HCT116 (cell line): ENCODE measurements at regions of chr4 and their contacts with region 1.

Region 1: GRCh38 chr4:102620697-102621497 is 119.7 kb downstream of the NFKB1 start:
- DNase-seq: peak; percentile 76
- ATAC-seq: peak; percentile 91
- H3K4me3 ChIP-seq: peak overlapping the region; percentile 28 to 42
- H3K27ac ChIP-seq: peak overlapping the region; percentile 36
- H3K4me1 ChIP-seq: peaks cover 17 to 30% of the 10 kb centered on the region in 2 experiments
- H3K27me3 ChIP-seq: no peaks in the 10 kb centered on the region
- CTCF ChIP-seq: peak; percentile 61 to 97 (median 81)
- POLR2A ChIP-seq: no peak
- RAD21 ChIP-seq: peak; percentile 97

Region 2: DNA sequence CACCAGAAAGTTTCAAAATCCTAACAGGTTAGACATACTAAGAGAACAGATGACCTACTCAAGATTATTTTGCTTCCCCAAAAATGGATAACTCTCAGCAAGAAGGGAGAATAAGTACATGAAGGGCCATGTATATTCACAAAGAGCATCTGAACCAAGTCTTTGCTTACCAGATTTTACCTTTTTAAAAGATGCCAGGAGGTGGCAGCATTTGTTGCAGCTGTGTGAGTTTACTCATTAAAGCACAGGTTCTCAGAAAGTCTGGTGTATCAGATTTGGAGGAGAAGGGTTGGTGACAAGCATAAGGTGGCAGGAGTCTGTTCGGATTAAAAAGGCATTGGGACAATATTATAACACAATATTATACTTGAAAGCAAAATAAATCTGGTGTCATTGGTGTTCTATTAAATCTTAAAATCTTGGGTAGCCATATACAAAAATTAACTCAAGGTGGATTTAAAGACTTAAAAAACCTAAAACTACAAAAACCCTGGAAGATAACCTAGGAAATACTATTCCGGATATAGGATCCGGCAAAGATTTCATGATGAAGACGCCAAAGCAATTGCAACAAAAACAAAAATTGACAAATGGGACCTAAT is 171.0 kb before region 1 on chr4:
- CTCF ChIA-PET with region 1: interaction called, 3 read pairs
- POLR2A ChIA-PET with region 1: no interaction called
- RAD21 ChIA-PET with region 1: interaction called in 1 of 2 experiments, 5 read pairs
- intact Hi-C with region 1: loop called (anchors 5 kb)
- DNase-seq: peak; percentile 42
- ATAC-seq: peak; percentile 82
- H3K4me3 ChIP-seq: no peak overlapping the region
- H3K27ac ChIP-seq: no peak overlapping the region
- H3K4me1 ChIP-seq: no peaks in the 10 kb centered on the region
- H3K27me3 ChIP-seq: no peaks in the 10 kb centered on the region
- CTCF ChIP-seq: peak; percentile 54 to 82 (median 80)
- POLR2A ChIP-seq: no peak
- RAD21 ChIP-seq: peak; percentile 88

Region 3: DNA sequence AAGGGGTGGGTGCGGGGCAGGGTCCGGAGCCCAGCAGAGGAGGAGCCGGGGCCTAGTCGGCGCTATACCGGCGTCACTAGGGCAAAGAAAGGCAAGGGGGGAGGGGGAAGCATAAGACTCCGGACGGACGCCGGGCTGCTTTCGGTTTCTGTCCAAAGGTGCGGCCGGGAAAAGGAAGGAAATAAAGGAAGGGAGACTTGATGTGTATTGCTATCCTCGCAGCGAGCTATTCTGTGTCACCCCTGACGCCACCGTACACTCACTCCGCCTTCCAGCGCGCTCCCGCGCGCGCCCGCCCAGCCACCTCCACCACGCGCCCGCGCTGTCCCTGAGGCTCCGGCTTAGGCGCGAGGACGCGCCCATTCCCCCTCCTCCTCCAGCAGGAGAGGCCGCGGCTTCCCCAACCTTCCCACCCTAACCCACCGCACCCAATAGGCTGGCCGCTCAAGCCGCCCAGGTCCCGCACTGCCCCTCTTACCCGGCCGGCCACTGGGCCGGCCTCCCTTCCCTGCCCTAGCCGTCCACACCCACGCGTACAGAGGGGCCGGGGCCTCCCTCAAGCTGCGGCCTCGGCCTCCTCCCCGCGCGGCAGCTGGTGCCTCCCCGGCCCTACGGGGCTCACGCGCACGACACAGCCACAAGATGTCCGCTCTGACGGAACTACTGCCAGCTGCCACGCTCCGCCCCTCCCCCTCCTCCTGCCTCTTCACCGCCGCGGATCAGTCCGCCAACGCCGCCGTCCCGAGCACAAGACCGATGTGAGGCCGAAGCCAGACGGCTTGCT is 206.2 kb after region 1 on chr4 and contains the start of gene UBE2D3:
- CTCF ChIA-PET with region 1: interaction called, 7 read pairs
- POLR2A ChIA-PET with region 1: interaction called, 6 read pairs
- RAD21 ChIA-PET with region 1: interaction called, 3 read pairs
- intact Hi-C with region 1: loop called (anchors 1 kb)
- DNase-seq: peak; percentile 92
- ATAC-seq: peak; percentile 58
- H3K4me3 ChIP-seq: peak within 1 kb of the TSS; percentile 76 to 83
- H3K27ac ChIP-seq: peak within 1 kb of the TSS; percentile 90
- H3K4me1 ChIP-seq: peaks cover 9 to 27% of the 10 kb centered on the region in 2 experiments
- H3K27me3 ChIP-seq: no peaks in the 10 kb centered on the region
- CTCF ChIP-seq: no peak; a peak in 1 of 6 replicates
- POLR2A ChIP-seq: peak; percentile 67
- RAD21 ChIP-seq: no peak
- total RNA-seq, gene UBE2D3: 302 TPM

Region 4: DNA sequence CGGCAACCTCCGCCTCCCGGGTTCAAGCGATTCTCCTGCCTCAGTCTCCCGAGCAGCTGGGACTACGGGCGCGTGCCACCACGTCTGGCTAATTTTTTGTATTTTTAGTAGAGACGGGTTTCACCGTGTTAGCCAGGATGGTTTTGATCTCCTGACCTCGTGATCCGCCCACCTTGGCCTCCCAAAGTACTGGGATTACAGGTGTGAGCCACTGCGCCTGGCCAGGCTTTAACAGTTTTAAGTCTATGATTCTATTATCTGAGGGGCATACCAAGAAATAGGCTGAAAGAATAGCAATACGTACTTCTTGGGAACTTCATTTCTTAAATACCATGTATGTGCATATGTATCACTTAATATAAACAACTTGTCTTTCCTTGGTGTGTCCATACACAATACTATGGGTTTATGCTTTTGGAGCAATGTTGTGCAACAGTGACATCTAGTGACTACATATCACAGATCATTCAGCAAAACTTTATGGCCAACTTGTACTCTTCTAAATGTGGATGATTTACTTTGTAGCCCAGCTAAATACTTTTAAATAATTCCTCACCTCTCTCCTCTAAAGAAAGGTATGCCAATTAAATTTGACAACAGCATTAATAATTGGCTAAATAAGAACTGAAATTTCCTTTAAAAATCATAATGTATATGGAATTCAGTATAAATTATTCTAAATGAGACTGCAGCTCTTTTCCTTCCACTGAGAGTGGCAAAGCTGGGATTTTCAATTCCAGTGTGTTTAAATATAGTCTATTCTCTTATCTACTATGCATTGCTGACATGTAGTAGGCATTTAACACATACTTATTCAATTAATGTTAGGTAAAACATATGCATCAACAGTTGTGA is 388.2 kb after region 1 on chr4:
- CTCF ChIA-PET with region 1: interaction called, 65 read pairs
- POLR2A ChIA-PET with region 1: no interaction called
- RAD21 ChIA-PET with region 1: interaction called, 4 to 9 read pairs
- intact Hi-C with region 1: loop called (anchors 1 kb)
- DNase-seq: peak; percentile 68
- ATAC-seq: peak; percentile 94
- H3K4me3 ChIP-seq: no peak overlapping the region
- H3K27ac ChIP-seq: no peak overlapping the region
- H3K4me1 ChIP-seq: no peaks in the 10 kb centered on the region
- H3K27me3 ChIP-seq: no peaks in the 10 kb centered on the region
- CTCF ChIP-seq: peak; percentile 60 to 91 (median 86)
- POLR2A ChIP-seq: no peak
- RAD21 ChIP-seq: peak; percentile 95

Region 5: GRCh38 chr4:103091601-103092223 is 470.8 kb after region 1 on chr4:
- CTCF ChIA-PET with region 1: interaction called, 22 read pairs
- POLR2A ChIA-PET with region 1: interaction called, 3 read pairs
- RAD21 ChIA-PET with region 1: interaction called in 1 of 2 experiments, 3 read pairs
- intact Hi-C with region 1: loop called (anchors 1 kb)
- DNase-seq: peak; percentile 63
- ATAC-seq: peak; percentile 63
- H3K4me3 ChIP-seq: no peak overlapping the region
- H3K27ac ChIP-seq: no peak overlapping the region
- H3K4me1 ChIP-seq: no peaks in the 10 kb centered on the region
- H3K27me3 ChIP-seq: no peaks in the 10 kb centered on the region
- CTCF ChIP-seq: peak; percentile 59 to 88 (median 77)
- POLR2A ChIP-seq: no peak
- RAD21 ChIP-seq: peak; percentile 92

Region 6: DNA sequence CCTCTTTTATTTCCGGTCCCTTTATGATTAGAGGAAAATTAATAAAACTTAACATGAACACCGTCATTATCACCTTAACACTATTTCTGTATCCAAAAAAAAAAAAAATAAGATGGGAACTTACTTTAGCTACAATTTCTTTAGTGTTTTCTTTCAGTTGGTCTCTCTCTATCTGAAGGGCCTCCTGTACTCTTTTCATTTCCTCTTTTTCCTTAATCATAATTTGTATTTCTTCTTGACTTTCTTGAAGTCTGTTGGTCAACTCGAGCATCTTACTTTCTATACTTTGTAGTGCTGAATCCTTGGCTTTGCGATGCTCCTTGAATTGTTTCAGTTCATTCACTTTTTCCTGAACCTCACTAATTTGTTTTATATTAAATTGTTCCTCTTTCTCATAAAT is 524.0 kb after region 1 on chr4:
- CTCF ChIA-PET with region 1: no interaction called
- POLR2A ChIA-PET with region 1: no interaction called
- RAD21 ChIA-PET with region 1: no interaction called
- intact Hi-C with region 1: no loop called
- DNase-seq: no peak
- ATAC-seq: no peak
- H3K4me3 ChIP-seq: no peak overlapping the region
- H3K27ac ChIP-seq: no peak overlapping the region
- H3K4me1 ChIP-seq: no peaks in the 10 kb centered on the region
- H3K27me3 ChIP-seq: no peaks in the 10 kb centered on the region
- CTCF ChIP-seq: no peak
- POLR2A ChIP-seq: no peak
- RAD21 ChIP-seq: no peak

Region 7: DNA sequence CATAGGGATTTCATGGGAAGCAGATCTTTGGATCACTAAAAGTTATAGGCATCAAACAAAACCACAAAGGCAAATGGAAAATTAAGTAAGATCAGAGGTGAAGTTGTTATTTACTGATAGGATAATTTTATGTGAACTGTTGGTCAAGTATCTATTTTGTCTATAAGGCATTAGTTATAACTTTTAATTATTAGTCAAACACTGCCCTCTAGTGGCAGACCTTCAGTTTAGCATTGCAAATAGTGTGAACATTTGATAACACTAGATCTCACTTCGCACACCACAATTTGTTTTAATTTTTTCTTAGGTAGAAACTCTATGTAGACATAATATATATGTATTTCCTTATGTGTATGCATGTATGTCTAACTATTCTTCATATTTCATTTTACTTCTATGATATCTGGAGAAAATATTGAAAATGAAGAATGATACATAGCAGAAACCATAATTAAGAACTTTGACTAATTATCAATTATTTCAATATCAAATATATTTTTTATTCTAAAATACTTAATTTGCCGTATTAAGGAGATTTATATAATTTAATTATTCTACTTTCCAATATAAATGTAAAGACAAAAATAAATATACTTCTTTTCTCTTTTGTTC is 1313.4 kb after region 1 on chr4:
- CTCF ChIA-PET with region 1: interaction called, 4 read pairs
- POLR2A ChIA-PET with region 1: no interaction called
- RAD21 ChIA-PET with region 1: no interaction called
- intact Hi-C with region 1: loop called (anchors 10 kb)
- DNase-seq: peak; percentile 58
- ATAC-seq: peak; percentile 77
- H3K4me3 ChIP-seq: no peak overlapping the region
- H3K27ac ChIP-seq: no peak overlapping the region
- H3K4me1 ChIP-seq: no peaks in the 10 kb centered on the region
- H3K27me3 ChIP-seq: no peaks in the 10 kb centered on the region
- CTCF ChIP-seq: peak; percentile 53 to 77 (median 58)
- POLR2A ChIP-seq: no peak
- RAD21 ChIP-seq: peak; percentile 75